Stomach (tissue), 19 donors: ENCODE measurements at regions of chr12 and their contacts with region 1.

Region 1: GRCh38 chr12:127108360-127109215 is 1158.4 kb upstream of the TMEM132C start:
- DNase-seq: peak; percentile 54 to 79
- H3K4me3 ChIP-seq: no peak overlapping the region
- H3K27ac ChIP-seq: no peak overlapping the region
- H3K4me1 ChIP-seq: no peaks in the 10 kb centered on the region
- H3K27me3 ChIP-seq: peaks cover 0 to 9% (median 0%) of the 10 kb centered on the region in 3 donors
- CTCF ChIP-seq: peak in 4 of 7 experiments; percentile 36 to 64 (median 55)
- EP300 ChIP-seq: no peak
- POLR2A ChIP-seq: no peak

Region 2: GRCh38 chr12:127389923-127390322 is 281.3 kb after region 1 on chr12:
- intact Hi-C with region 1: loop called (anchors 5 kb)
- DNase-seq: peak in 1 of 2 donors; percentile 68
- H3K4me3 ChIP-seq: no peak overlapping the region
- H3K27ac ChIP-seq: no peak overlapping the region
- H3K4me1 ChIP-seq: no peaks in the 10 kb centered on the region
- H3K27me3 ChIP-seq: peaks cover 0 to 34% (median 0%) of the 10 kb centered on the region in 3 donors
- CTCF ChIP-seq: no peak
- EP300 ChIP-seq: no peak
- POLR2A ChIP-seq: no peak

Region 3: DNA sequence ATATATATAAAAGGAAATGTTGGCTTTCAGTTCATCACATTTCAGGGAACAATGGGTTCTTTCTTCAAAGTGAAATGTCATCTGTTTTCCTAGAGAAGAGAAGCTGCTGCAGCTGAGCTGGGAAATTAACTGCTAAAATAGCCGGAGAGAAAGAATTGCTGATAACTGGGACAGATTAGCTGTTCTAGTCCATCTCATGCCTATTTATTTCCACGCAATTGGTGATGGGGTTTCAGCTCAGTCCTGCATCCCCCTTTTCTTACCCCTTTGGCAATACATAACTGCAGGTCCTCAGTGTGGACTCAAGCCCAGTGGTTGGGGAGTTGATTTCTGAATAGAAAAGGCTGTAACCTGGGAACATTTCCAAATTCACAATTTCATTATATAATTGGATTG is 721.5 kb after region 1 on chr12:
- intact Hi-C with region 1: no loop called
- DNase-seq: peak in 1 of 2 donors; percentile 10
- H3K4me3 ChIP-seq: no peak overlapping the region
- H3K27ac ChIP-seq: no peak overlapping the region
- H3K4me1 ChIP-seq: no peaks in the 10 kb centered on the region
- H3K27me3 ChIP-seq: no peaks in the 10 kb centered on the region
- CTCF ChIP-seq: no peak
- EP300 ChIP-seq: no peak
- POLR2A ChIP-seq: no peak